ENCODE measurements at regions of chr12 and their contacts with region 1.

Region 1: GRCh38 chr12:122051231-122051876 is 27.2 kb upstream of the MLXIP start:
- DNase-seq: no peak
- CTCF ChIP-seq: no peak

Region 2: DNA sequence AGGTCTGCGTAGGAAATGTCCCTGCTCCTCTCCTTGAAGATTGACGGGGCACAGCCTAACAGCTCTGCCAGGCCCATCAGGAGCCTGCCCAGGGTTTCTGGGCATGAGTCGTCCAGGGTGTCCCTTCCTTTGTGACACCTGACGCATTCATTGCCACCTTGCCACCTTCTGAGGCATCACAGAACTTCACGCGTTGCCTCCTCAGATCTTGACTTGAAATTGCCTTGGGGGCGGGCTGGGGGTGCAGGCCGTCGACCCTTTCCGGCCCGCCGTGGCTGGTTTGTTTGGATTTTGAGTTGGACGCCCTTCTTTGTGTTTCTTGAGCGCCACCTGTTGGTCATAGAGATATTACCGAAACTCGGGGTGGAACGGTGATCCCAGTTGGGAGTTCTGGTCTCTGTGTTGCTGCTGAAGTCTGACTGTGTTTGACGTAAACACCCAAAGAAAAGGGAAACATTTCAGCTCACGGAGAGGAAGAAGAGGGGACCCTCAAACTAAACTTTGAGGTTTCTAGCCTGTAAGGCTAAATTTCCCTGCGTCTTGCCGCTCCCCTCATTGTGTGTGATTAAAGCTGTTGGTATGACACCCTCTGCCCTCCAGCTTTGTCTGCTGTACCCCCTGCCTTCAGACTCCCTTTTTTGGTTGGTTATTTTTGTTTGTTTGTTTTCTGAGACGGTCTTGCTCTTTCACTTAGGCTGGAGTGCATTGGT is 71.9 kb after region 1 on chr12:
- in situ Hi-C with region 1: loop called (anchors 5 kb)
- DNase-seq: peak; percentile 82
- CTCF ChIP-seq: peak; percentile 74

Region 3: GRCh38 chr12:122182887-122183585 is 131.7 kb after region 1 on chr12 and contains the start of gene LRRC43:
- in situ Hi-C with region 1: loop called (anchors 10 kb)
- DNase-seq: peak; percentile 65
- CTCF ChIP-seq: no peak

Region 4: DNA sequence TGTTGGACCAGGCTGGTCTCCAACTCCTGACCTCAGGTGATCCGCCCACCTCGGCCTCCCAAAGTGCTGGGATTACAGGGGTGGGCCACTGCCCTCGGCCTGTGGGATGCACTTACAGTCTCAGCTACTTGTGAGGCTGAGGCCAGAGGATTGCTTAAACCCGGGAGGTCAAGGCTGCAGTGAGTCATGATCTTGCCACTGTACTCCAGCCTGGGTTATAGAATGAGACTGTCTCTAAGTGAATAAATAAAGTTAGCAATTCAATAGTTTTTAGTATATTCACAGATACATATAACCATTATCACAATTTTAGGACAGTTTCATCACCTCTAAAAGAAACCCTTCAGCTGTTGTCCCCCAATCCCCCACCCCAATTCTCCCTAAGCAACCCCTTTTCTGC is 590.7 kb after region 1 on chr12:
- in situ Hi-C with region 1: no loop called
- DNase-seq: no peak
- CTCF ChIP-seq: no peak